ENCODE measurements at regions of chr12 and their contacts with region 1.

Region 1: GRCh38 chr12:132014092-132014914 is 64.6 kb downstream of the EP400 start:
- DNase-seq: no peak
- H3K4me3 ChIP-seq: no peak overlapping the region
- H3K27ac ChIP-seq: no peak overlapping the region
- H3K4me1 ChIP-seq: no peaks in the 10 kb centered on the region
- H3K27me3 ChIP-seq: no peaks in the 10 kb centered on the region
- CTCF ChIP-seq: no peak

Region 2: GRCh38 chr12:132056951-132057350 is 42.6 kb after region 1 on chr12:
- CTCF ChIA-PET with region 1: no interaction called
- dilution Hi-C with region 1: loop called (anchors 5 kb)
- in situ Hi-C with region 1: no loop called
- intact Hi-C with region 1: no loop called
- DNase-seq: no peak
- H3K4me3 ChIP-seq: no peak overlapping the region
- H3K27ac ChIP-seq: no peak overlapping the region
- H3K4me1 ChIP-seq: peaks cover 8% of the 10 kb centered on the region
- H3K27me3 ChIP-seq: no peaks in the 10 kb centered on the region
- CTCF ChIP-seq: no peak